Heart left ventricle (tissue), 16 donors: ENCODE measurements at regions of chr11 and their contacts with region 1.

Region 1: DNA sequence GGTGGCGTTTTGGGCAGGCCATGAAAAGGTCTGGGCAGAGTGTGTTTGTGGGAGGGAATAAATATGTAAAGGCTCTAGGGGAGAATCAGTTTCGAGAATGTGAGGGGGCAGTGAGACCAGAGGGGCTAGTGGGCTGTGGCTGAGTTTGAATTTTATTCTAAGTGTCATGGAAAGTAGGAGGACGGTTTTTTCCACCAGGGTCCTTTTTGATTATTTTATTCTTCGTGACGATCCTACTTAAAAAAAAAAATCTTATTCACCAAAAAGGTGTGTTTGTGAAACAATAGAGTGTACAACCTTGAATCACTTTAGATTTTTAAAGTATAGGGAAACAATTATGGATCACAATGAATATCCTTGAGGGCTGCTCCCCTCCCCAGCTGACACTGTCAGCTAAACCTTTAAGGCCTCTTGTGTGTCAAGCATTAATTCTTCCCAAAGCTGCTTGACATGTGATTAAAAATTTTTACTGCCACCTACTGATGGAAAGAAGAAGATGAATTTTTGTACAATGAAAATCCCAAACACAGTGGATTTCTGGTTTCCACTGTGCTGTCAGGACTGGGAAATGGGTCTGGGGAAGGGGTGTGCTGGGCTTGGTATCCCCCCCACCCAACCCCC is 107.5 kb upstream of the OR4B1 start:
- DNase-seq: no peak
- ATAC-seq: peak in 2 of 4 donors; percentile 38 to 57
- H3K4me3 ChIP-seq: peak overlapping the region in 7 of 12 donors; percentile 4 to 42 (median 30)
- H3K27ac ChIP-seq: peak overlapping the region in 1 of 12 donors; percentile 66
- H3K4me1 ChIP-seq: peaks cover 0 to 62% (median 15%) of the 10 kb centered on the region in 12 donors
- H3K27me3 ChIP-seq: no peaks in the 10 kb centered on the region
- CTCF ChIP-seq: peak in 6 of 12 donors; percentile 24 to 52 (median 44)
- POLR2A ChIP-seq: no peak

Region 2: GRCh38 chr11:46710821-46711269 is 1398.3 kb before region 1 on chr11:
- intact Hi-C with region 1: no loop called
- DNase-seq: peak in 4 of 5 donors; percentile 77 to 87 (median 82)
- ATAC-seq: peak; percentile 97 to 99 (median 98)
- H3K4me3 ChIP-seq: no peak overlapping the region
- H3K27ac ChIP-seq: peak overlapping the region; percentile 77 to 99 (median 90)
- H3K4me1 ChIP-seq: peaks cover 0 to 29% (median 16%) of the 10 kb centered on the region in 12 donors
- H3K27me3 ChIP-seq: no peaks in the 10 kb centered on the region
- CTCF ChIP-seq: no peak
- POLR2A ChIP-seq: no peak

Region 3: DNA sequence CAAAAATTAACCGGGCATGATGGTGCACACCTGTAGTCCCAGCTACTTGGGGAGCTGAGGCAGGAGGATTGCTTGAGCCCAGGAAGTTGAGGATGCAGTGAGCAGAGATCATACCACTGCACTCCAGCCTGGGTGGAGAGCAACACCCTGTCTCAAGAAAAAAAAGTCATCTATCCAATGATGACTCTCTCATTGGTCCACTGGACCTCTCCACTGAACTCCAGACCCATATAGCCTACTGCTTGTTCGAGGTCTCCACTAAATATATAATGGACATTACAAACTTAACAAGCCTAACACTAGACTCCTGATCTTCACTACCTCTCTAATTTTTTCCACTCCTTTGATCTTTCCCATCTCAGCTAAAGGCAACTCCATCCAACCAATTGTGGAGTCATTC is 433.3 kb before region 1 on chr11:
- intact Hi-C with region 1: no loop called
- DNase-seq: no peak
- ATAC-seq: no peak
- H3K4me3 ChIP-seq: no peak overlapping the region
- H3K27ac ChIP-seq: no peak overlapping the region
- H3K4me1 ChIP-seq: no peaks in the 10 kb centered on the region
- H3K27me3 ChIP-seq: no peaks in the 10 kb centered on the region
- CTCF ChIP-seq: no peak
- POLR2A ChIP-seq: no peak

Region 4: DNA sequence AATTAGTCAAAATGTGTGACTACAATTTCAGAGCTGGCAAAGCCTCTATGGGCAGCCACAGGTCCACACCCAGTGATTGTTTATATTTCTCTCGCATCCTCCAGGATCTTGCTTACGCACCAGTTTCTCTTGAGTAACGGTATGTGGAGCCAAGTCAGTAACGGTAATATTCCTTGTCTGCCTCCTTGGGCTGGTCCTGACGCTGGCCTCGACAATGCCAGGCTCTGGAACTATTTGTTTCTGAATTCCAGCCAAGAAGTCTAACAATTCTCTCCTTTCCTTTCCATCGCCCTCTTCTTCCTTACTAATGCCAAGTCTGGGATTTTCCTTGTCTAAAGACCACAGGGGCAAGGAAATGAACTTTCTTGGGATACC is 251.0 kb before region 1 on chr11:
- intact Hi-C with region 1: loop called in 1 of 10 experiments (anchors 10 kb)
- DNase-seq: no peak
- ATAC-seq: peak; percentile 27 to 69 (median 49)
- H3K4me3 ChIP-seq: no peak overlapping the region
- H3K27ac ChIP-seq: peak overlapping the region in 1 of 12 donors; percentile 24
- H3K4me1 ChIP-seq: peaks cover 0 to 33% (median 0%) of the 10 kb centered on the region in 12 donors
- H3K27me3 ChIP-seq: no peaks in the 10 kb centered on the region
- CTCF ChIP-seq: no peak
- POLR2A ChIP-seq: no peak

Region 5: DNA sequence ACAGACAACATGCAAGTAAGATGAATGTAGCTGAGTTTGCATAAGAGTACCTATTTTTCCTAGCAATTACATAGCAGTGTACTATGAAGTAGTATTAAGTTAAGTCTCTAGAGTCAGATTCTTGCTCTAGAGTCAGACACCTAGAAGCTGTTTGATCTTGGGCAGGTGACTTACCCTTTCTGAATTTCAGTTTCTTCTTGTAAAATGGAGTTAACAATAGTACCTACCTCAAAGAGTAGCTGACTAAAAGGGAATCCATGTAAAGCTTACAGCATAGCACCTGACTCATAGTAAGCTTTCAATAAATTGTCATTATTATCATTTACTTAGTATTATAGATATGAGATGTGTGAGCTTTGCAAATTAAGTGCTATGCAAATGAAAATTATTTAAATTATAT is 176.6 kb before region 1 on chr11:
- intact Hi-C with region 1: loop called (anchors 1 to 2 kb)
- DNase-seq: no peak
- ATAC-seq: no peak
- H3K4me3 ChIP-seq: no peak overlapping the region
- H3K27ac ChIP-seq: no peak overlapping the region
- H3K4me1 ChIP-seq: peaks cover 0 to 28% (median 0%) of the 10 kb centered on the region in 12 donors
- H3K27me3 ChIP-seq: no peaks in the 10 kb centered on the region
- CTCF ChIP-seq: no peak
- POLR2A ChIP-seq: no peak

Region 6: DNA sequence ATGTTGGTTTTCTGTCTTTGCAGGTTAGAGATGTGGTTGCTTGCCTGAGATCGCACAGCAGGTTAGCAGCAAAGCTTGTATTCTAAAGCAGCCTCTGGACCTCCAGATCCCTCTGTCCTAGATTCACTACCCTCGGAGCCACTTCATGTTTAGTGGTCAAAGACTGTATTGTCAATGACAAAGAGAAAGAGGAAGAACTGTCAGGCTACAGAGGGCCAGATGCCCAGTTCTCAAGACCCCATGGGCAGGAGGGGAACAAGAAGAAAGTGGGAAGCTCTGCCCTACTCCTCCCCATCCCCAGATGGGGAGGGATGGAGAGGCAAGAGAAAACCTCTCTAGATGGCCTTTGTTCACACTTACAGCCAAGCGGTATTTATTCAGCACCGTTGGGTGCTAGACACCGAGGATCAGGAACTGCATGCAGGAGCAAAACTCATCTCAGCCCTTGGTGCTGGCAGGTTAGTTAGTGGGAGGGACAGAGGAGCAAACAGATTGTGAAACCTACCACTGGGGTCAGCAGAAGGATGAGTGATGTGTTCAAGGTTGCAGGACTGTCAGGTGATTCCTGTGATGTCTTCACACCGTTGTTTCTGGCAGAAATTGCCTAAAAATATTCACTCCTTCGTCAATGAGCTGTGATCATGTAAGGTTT is 167.1 kb before region 1 on chr11:
- intact Hi-C with region 1: loop called in 1 of 10 experiments (anchors 2 kb)
- DNase-seq: peak in 1 of 5 donors; percentile 10
- ATAC-seq: peak in 2 of 4 donors; percentile 47 to 57
- H3K4me3 ChIP-seq: no peak overlapping the region
- H3K27ac ChIP-seq: no peak overlapping the region
- H3K4me1 ChIP-seq: peaks cover 0 to 34% (median 4%) of the 10 kb centered on the region in 12 donors
- H3K27me3 ChIP-seq: no peaks in the 10 kb centered on the region
- CTCF ChIP-seq: no peak
- POLR2A ChIP-seq: no peak

Region 7: GRCh38 chr11:47980245-47981049 is 128.7 kb before region 1 on chr11 and contains the start of gene PTPRJ:
- intact Hi-C with region 1: loop called in 3 of 10 experiments (anchors 5 to 10 kb)
- DNase-seq: peak; percentile 58 to 81 (median 68)
- ATAC-seq: peak; percentile 42 to 75 (median 66)
- H3K4me3 ChIP-seq: peak within 1 kb of the TSS; percentile 65 to 97 (median 85)
- H3K27ac ChIP-seq: peak within 1 kb of the TSS in 11 of 12 donors; percentile 3 to 93 (median 57)
- H3K4me1 ChIP-seq: peaks cover 0 to 47% (median 12%) of the 10 kb centered on the region in 12 donors
- H3K27me3 ChIP-seq: no peaks in the 10 kb centered on the region
- CTCF ChIP-seq: no peak
- POLR2A ChIP-seq: no peak
- total RNA-seq, gene PTPRJ: 5.5 to 39.0 (median 6.9) TPM

Region 8: GRCh38 chr11:48047616-48048015 is 61.5 kb before region 1 on chr11:
- intact Hi-C with region 1: loop called in 1 of 10 experiments (anchors 10 kb)
- DNase-seq: no peak
- ATAC-seq: no peak
- H3K4me3 ChIP-seq: no peak overlapping the region
- H3K27ac ChIP-seq: no peak overlapping the region
- H3K4me1 ChIP-seq: peaks cover 0 to 85% (median 4%) of the 10 kb centered on the region in 12 donors
- H3K27me3 ChIP-seq: no peaks in the 10 kb centered on the region
- CTCF ChIP-seq: no peak
- POLR2A ChIP-seq: no peak

Region 9: DNA sequence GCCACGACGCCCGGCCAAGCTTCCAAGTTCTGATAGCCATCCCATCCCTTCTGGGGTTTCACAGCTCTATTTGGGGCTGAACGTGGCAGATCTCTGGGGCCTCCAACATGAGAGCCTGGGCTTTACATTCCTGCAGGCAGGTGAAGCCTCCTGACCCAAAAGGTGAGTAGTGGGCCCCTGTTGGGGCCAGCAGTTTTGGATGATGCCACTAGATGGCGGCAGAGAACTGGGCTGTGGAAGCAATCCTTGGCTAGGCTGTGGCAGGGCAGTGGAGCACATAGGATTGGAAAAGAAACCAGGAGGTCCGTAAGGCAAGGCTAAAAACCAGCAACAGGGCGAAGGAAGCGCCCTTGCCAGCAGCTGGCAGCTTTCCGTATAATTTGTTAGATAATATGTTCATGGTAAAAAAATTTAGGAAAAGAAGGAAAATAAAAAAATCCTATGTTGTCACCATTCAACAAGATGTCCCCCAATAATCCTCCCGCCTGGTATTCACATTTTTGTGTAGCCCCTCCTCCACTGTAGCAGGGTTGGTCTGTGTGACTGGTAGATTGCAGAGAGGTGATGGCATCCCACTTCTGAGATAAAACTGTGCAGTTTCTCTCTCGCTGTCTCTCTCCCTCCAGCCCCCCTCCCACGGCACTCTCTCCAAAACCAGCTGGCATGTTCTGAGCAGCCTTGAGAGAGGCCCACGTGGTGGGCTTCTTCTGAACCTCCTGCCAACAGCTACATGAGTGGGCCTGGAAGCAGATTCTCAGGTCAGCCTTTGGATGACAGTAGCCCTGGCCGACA is 63.9 kb after region 1 on chr11:
- intact Hi-C with region 1: no loop called
- DNase-seq: peak; percentile 59 to 82 (median 69)
- ATAC-seq: peak; percentile 48 to 73 (median 66)
- H3K4me3 ChIP-seq: peak overlapping the region in 3 of 12 donors; percentile 13 to 28 (median 26)
- H3K27ac ChIP-seq: peak overlapping the region in 11 of 12 donors; percentile 17 to 91 (median 71)
- H3K4me1 ChIP-seq: peaks cover 0 to 46% (median 29%) of the 10 kb centered on the region in 12 donors
- H3K27me3 ChIP-seq: no peaks in the 10 kb centered on the region
- CTCF ChIP-seq: peak; percentile 78 to 90 (median 84)
- POLR2A ChIP-seq: no peak